PC-3 (cell line): ENCODE measurements at regions of chr9 and their contacts with region 1.

Region 1: DNA sequence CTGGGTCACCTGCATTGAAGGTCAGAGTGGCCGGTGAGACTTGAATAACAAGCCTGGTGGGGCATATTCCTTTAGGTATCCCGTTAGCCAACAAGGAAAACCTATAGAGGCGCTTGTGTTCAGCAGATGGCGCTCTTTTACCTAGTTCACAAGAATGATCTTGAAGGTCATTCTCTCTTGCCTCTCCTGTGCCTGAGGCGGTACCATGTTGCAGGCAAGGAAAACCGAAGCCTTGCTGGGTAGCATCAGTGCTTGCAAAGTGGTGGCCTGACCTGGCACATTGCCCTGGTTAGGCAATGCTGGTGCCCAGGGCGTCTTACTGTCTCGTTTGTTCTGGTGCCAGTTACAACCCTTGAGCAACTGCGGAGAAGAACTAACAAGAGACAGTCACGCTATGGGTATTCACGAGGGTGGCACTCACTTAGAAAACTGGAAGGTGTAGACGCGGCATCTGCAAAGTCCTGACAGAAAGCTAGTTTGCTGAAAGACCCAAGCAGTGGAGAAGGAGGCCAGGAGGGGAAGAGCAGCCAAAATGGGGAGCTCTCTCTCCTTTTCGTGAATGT is 56.7 kb downstream of the AOPEP start:
- DNase-seq: peak; percentile 98
- ATAC-seq: peak; percentile 89
- H3K4me3 ChIP-seq: no peak overlapping the region
- H3K27ac ChIP-seq: peak overlapping the region; percentile 80
- H3K4me1 ChIP-seq: peaks cover 21% of the 10 kb centered on the region
- H3K27me3 ChIP-seq: no peaks in the 10 kb centered on the region
- CTCF ChIP-seq: peak; percentile 81

Region 2: GRCh38 chr9:94554439-94555391 is 228.5 kb before region 1 on chr9 and contains the start of gene PCAT7:
- CTCF ChIA-PET with region 1: no interaction called
- POLR2A ChIA-PET with region 1: no interaction called
- intact Hi-C with region 1: loop called (anchors 10 kb)
- DNase-seq: peak; percentile 87
- ATAC-seq: peak; percentile 85
- H3K4me3 ChIP-seq: peak within 1 kb of the TSS; percentile 85
- H3K27ac ChIP-seq: peak within 1 kb of the TSS; percentile 82
- H3K4me1 ChIP-seq: peaks cover 16% of the 10 kb centered on the region; the same call in 1 of the 2 replicates
- H3K27me3 ChIP-seq: no peaks in the 10 kb centered on the region
- CTCF ChIP-seq: peak; percentile 69
- total RNA-seq, gene PCAT7: 1.9 and 2.5 TPM in 2 replicates

Region 3: DNA sequence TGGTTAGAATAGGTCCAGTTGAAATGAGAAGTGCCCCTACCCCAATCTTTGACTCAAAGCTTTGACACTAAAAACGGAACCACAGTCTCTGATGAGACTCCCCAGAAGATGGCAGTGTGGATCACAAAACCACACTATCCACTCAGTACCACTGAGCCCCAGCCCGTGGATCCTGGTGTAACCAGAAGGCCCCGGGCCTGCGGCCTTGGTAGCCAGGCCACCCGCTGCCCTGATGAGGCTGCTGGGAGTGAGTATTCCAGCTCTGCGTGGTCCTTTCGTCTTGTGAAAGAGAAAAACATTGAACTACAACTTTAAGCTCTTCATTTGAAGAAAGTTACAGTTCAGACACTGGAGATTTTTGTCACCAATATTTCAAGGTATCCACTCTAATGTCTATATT is 101.7 kb before region 1 on chr9:
- CTCF ChIA-PET with region 1: interaction called, 6 read pairs
- POLR2A ChIA-PET with region 1: no interaction called
- intact Hi-C with region 1: loop called (anchors 5 kb)
- DNase-seq: peak; percentile 68
- ATAC-seq: peak; percentile 99
- H3K4me3 ChIP-seq: no peak overlapping the region
- H3K27ac ChIP-seq: no peak overlapping the region
- H3K4me1 ChIP-seq: peaks cover 4% of the 10 kb centered on the region; the same call in 1 of the 2 replicates
- H3K27me3 ChIP-seq: no peaks in the 10 kb centered on the region
- CTCF ChIP-seq: peak; percentile 83

Region 4: GRCh38 chr9:94867281-94867841 is 84.2 kb after region 1 on chr9:
- CTCF ChIA-PET with region 1: no interaction called
- POLR2A ChIA-PET with region 1: no interaction called
- intact Hi-C with region 1: loop called (anchors 2 kb)
- DNase-seq: peak; percentile 79
- ATAC-seq: peak; percentile 48
- H3K4me3 ChIP-seq: peak overlapping the region; percentile 52
- H3K27ac ChIP-seq: peak overlapping the region; percentile 99
- H3K4me1 ChIP-seq: peaks cover 68% of the 10 kb centered on the region
- H3K27me3 ChIP-seq: no peaks in the 10 kb centered on the region
- CTCF ChIP-seq: no peak

Region 5: DNA sequence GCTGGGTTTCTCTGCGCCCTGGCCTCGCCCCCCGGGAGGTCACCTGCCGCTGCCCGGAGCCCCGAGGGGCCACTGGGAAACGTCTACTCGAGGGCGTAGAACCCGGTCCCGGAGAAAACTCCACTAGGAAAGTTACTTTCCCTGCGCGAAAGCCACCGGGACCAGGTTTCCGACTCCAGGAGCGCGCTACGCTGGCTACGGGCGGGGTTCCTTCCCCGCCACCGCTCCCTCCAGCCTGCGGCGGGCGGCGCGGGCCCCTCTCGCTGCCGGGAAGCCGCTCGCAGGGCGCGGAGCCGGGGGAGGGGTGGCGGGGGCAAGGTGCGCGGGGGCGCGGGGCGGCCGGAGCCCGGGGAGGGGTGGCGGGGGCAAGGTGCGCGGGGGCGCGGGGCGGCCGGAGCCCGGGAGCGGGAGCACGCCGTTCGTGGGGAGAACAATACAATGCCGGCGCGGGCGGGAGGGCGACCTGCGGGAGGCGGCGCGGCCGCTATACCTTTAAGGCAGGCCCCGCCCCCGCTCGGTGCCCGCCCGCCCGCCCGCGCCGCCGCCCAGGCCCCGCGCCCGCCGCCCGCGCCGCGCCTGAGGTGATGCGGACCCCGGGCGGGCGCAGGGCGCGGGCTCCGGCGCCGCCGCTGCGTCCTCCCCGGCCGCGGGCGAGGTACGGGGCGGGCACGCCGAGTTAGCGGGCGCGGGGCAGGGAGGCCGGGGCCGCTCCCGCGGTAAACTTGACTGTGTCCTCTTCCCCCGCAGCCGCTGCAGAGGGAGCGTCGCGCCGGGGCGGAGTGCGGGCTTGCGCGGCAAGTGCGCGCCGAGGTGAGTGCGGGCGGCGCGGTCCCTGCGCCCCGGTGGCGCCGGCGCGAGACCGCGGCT is 221.5 kb after region 1 on chr9:
- CTCF ChIA-PET with region 1: no interaction called
- POLR2A ChIA-PET with region 1: no interaction called
- intact Hi-C with region 1: loop called (anchors 2 kb)
- DNase-seq: peak; percentile 36
- ATAC-seq: peak; percentile 64
- H3K4me3 ChIP-seq: peak overlapping the region; percentile 87
- H3K27ac ChIP-seq: peak overlapping the region; percentile 81
- H3K4me1 ChIP-seq: peaks cover 33% of the 10 kb centered on the region
- H3K27me3 ChIP-seq: no peaks in the 10 kb centered on the region
- CTCF ChIP-seq: no peak

Region 6: DNA sequence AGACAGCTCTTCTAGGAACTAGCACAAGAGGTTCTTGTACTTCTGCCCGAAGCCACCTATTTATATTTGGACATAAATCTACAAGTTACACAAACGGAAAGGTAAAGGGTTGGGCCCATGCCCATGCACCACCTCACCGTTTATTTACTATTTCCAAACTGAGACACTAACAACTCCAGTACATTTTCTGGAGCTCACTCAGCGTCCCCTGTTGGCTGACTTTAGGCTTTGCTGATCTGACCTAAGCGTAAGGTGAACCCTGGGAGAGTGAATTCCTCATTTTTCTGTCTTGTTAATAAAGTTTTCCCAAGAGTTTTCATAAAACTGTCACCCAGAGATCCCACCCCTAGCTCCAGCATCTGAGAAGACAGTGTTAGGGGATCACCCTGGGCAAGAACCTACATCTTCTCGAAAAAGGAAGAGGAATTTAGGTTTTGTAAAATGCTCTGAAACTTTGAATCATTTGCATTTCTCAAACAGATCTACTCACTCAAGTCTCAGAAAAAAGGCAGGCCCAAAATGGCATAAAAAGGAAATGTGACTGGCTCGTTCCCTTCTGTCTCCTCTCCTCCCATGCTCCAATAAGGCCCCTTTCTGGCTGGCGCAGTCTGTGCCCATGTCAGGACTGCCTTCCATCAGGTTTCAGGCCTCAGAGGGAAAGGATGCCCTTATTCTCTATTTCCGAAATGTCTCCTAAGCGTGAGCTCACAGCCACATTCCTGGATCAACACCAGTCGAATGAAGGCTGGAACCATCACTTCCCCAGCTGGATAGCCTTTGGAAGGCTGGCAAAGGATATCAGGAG is 333.0 kb after region 1 on chr9:
- CTCF ChIA-PET with region 1: no interaction called
- POLR2A ChIA-PET with region 1: no interaction called
- intact Hi-C with region 1: loop called (anchors 1 kb)
- DNase-seq: peak; percentile 80
- ATAC-seq: peak; percentile 90
- H3K4me3 ChIP-seq: no peak overlapping the region
- H3K27ac ChIP-seq: peak overlapping the region; percentile 45
- H3K4me1 ChIP-seq: peaks cover 20% of the 10 kb centered on the region
- H3K27me3 ChIP-seq: no peaks in the 10 kb centered on the region
- CTCF ChIP-seq: peak; percentile 86